ENCODE measurements at regions of chr16 and their contacts with region 1.

Region 1: DNA sequence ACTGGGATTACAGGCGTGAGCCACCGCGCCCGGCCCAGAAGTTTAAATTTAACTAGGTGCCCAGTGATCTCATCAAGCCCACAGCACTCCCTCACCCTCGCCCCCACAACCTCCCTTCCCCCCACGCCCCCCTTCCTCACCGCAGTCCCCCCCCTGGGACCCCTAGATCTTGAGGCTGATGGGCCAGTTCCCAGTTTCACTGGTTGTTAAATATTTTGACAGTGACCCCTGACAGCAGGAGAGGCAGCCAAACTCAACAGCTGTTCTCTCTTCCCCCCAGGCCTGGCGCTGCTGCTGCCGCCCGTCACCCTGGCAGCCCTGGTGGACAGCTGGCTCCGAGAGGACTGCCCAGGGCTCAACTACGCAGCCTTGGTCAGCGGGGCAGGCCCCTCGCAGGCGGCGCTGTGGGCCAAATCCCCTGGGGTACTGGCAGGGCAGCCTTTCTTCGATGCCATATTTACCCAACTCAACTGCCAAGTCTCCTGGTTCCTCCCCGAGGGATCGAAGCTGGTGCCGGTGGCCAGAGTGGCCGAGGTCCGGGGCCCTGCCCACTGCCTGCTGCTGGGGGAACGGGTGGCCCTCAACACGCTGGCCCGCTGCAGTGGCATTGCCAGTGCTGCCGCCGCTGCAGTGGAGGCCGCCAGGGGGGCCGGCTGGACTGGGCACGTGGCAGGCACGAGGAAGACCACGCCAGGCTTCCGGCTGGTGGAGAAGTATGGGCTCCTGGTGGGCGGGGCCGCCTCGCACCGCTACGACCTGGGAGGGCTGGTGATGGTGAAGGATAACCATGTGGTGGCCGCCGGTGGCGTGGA is 15.6 kb downstream of the QPRT start:
- DNase-seq: no peak
- ATAC-seq: no peak
- H3K4me3 ChIP-seq: no peak overlapping the region
- H3K27ac ChIP-seq: no peak overlapping the region
- H3K4me1 ChIP-seq: no peaks in the 10 kb centered on the region
- H3K27me3 ChIP-seq: no peaks in the 10 kb centered on the region
- CTCF ChIP-seq: no peak

Region 2: DNA sequence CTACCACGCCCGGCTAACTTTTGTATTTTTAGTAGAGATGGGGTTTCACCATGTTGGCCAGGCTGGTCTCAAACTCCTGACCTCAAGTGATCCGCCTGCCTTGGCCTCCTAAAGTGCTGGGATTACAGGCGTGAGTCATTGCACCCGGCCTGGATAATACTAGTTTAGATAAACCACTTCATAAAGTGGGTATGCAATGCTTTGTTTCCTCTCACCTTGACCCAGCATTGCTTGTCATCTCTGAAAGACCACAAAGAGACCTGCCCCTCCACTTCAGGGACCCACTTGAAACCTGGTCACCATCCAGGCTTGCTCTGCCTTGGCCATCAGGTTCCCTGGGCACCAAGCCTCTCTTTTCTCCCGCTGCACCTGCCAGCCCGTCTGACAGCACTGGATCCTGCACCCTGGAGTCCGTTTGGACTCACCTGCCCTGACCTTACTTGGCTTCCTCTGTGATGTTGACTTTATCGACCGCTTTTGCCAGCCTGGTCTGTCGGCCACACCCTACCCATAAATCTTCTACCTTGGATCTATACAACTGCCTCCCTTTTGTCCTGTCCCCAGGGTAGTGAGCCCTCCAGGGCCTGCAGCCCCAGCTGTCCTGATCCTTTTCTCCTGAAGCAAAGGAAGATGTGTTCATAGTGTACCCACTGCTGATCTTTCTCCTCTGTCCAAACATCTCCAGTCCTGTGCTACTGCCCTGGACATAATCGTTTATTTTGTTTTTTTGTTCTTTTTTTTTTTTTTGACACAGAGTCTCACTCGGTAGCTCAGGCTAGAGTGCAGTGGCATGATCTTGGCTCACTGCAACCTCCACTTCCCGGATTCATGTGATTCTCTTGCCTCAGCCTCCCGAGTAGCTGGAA is 70.8 kb after region 1 on chr16:
- intact Hi-C with region 1: no loop called
- DNase-seq: peak; percentile 63 to 89 (median 80)
- ATAC-seq: peak; percentile 94 to 98 (median 96)
- H3K4me3 ChIP-seq: no peak overlapping the region
- H3K27ac ChIP-seq: peak overlapping the region; percentile 17 to 27 (median 22)
- H3K4me1 ChIP-seq: peaks cover 9 to 16% (median 11%) of the 10 kb centered on the region in 3 donors
- H3K27me3 ChIP-seq: no peaks in the 10 kb centered on the region
- CTCF ChIP-seq: no peak

Region 3: GRCh38 chr16:29848420-29849297 is 154.1 kb after region 1 on chr16:
- intact Hi-C with region 1: loop called in 1 of 3 experiments (anchors 10 kb)
- DNase-seq: peak; percentile 65 to 96 (median 86)
- ATAC-seq: peak; percentile 82 to 92 (median 90)
- H3K4me3 ChIP-seq: no peak overlapping the region
- H3K27ac ChIP-seq: no peak overlapping the region
- H3K4me1 ChIP-seq: no peaks in the 10 kb centered on the region
- H3K27me3 ChIP-seq: no peaks in the 10 kb centered on the region
- CTCF ChIP-seq: peak; percentile 81 to 91 (median 88)

Region 4: GRCh38 chr16:30005341-30006094 is 310.9 kb after region 1 on chr16:
- intact Hi-C with region 1: loop called in 2 of 3 experiments (anchors 10 kb)
- DNase-seq: peak in 3 of 6 donors; percentile 47 to 74 (median 49)
- ATAC-seq: peak; percentile 62 to 85 (median 79)
- H3K4me3 ChIP-seq: no peak overlapping the region
- H3K27ac ChIP-seq: no peak overlapping the region
- H3K4me1 ChIP-seq: no peaks in the 10 kb centered on the region
- H3K27me3 ChIP-seq: no peaks in the 10 kb centered on the region
- CTCF ChIP-seq: peak; percentile 67 to 86 (median 75)

Region 5: GRCh38 chr16:30024451-30024850 is 329.9 kb after region 1 on chr16:
- intact Hi-C with region 1: loop called in 1 of 3 experiments (anchors 5 kb)
- DNase-seq: no peak
- ATAC-seq: no peak
- H3K4me3 ChIP-seq: no peak overlapping the region
- H3K27ac ChIP-seq: no peak overlapping the region
- H3K4me1 ChIP-seq: no peaks in the 10 kb centered on the region
- H3K27me3 ChIP-seq: no peaks in the 10 kb centered on the region
- CTCF ChIP-seq: no peak